Vagina (tissue), 2 donors: ENCODE measurements at regions of chr18 and their contacts with region 1.

Region 1: DNA sequence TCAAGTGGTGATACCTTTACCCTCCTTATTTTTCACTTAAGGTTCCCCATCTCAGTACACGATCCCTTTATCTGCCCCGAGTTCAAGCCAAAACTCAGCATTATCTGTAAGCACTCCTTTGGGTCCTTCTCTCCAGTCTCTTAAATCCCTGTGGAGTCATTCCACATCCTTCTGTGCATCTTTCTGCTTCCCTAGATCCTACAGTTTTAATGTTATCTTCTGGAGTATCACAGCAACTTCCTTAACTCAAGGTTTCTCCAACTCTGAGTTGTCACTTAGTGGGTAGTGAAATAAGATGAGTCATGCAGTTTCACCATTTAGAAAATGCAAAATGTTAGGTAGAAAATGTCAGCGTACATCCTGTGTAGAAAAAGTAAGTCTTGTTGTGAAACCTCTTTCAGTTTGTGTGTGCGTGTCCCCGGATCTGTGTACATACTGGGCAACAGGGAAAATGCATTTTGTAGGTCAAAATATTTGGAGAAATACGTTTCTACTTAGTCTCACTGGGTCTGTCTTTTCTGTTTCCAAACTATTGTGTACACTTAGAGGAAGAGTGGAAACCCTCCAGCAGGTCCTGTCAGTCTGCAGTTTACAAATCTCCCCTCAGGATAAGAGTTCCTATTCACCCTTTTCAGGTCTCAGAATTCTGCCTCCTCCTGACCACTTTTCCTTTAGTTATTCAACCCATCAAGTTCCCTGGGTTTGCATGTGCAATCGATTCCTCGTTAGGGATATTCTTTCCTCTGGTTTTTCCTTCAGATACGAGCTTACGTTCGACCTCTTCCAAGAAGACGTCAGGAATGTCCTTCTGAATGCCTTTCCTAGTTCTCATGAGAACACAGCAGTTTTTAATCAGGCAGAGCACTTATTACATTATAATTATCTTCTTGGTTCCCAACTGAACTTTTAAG is 154.8 kb downstream of the TGIF1 start:
- DNase-seq: no peak
- H3K4me3 ChIP-seq: peak overlapping the region; percentile 41 to 43
- H3K27ac ChIP-seq: peak overlapping the region; percentile 88
- H3K4me1 ChIP-seq: peaks cover 42% of the 10 kb centered on the region
- H3K27me3 ChIP-seq: no peaks in the 10 kb centered on the region
- CTCF ChIP-seq: no peak
- POLR2A ChIP-seq: no peak

Region 2: DNA sequence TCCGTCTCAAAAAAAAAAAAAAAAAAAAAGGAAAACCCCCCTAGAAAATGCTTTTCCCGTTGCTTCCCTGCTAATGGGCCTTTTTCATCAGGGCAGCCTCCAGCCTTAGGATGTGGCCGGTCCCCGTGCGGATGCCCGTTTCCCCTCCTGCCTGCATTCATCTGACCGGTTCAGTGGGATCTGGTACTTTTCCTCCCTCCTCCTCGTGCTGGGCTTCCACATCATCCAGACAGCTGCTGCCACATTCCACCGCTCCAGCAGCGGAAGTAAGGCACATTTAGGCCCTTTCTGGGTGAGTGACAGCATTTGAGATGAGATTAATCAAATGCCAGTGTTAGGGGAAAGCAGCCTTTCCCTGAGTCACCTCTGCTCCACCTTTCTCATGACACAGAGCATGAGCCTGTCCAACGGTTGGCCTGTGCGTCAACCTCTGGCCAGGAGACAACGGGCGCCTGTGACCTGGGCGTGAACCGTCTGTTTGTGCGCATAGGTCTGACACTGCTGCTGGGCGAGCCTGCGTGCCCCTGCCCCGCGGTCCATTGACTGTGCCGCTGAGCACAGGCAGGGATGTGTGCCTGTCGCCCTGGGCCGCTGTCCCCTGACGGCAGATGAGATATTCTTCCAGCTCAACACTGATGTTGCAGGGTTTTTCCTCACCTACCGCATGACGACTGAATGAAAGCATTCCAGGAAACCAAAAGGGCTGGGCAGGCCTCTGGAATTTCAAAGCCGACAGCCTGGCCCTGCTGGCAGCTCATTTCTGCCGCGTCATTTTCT is 19.2 kb after region 1 on chr18:
- intact Hi-C with region 1: loop called (anchors 1 kb)
- DNase-seq: no peak
- H3K4me3 ChIP-seq: no peak overlapping the region
- H3K27ac ChIP-seq: peak overlapping the region; percentile 86
- H3K4me1 ChIP-seq: peaks cover 36% of the 10 kb centered on the region
- H3K27me3 ChIP-seq: no peaks in the 10 kb centered on the region
- CTCF ChIP-seq: no peak
- POLR2A ChIP-seq: no peak